Caco-2 (cell line): ENCODE measurements at regions of chr1 and their contacts with region 1.

Region 1: GRCh38 chr1:27365372-27366112 is 1.2 kb downstream of the MAP3K6 start:
- DNase-seq: peak; percentile 74 to 83
- H3K4me3 ChIP-seq: peak overlapping the region; percentile 46
- H3K4me3 Mint-ChIP-seq: peak overlapping the region; percentile 98
- H3K27ac Mint-ChIP-seq: peak overlapping the region; percentile 85
- H3K4me1 ChIP-seq: peaks cover 16% of the 10 kb centered on the region
- H3K4me1 Mint-ChIP-seq: peaks cover 7% of the 10 kb centered on the region
- H3K27me3 ChIP-seq: no peaks in the 10 kb centered on the region
- H3K27me3 Mint-ChIP-seq: no peaks in the 10 kb centered on the region
- CTCF ChIP-seq: no peak

Region 2: GRCh38 chr1:27192039-27192529 is 173.5 kb before region 1 on chr1:
- CTCF ChIA-PET with region 1: no interaction called
- POLR2A ChIA-PET with region 1: no interaction called
- intact Hi-C with region 1: no loop called
- DNase-seq: peak; percentile 11 to 46
- H3K4me3 ChIP-seq: no peak overlapping the region
- H3K4me3 Mint-ChIP-seq: no peak overlapping the region
- H3K27ac Mint-ChIP-seq: peak overlapping the region; percentile 39
- H3K4me1 ChIP-seq: peaks cover 9% of the 10 kb centered on the region
- H3K4me1 Mint-ChIP-seq: peaks cover 11% of the 10 kb centered on the region
- H3K27me3 ChIP-seq: no peaks in the 10 kb centered on the region
- H3K27me3 Mint-ChIP-seq: no peaks in the 10 kb centered on the region
- CTCF ChIP-seq: no peak

Region 3: GRCh38 chr1:27332536-27333281 is 32.8 kb before region 1 on chr1:
- CTCF ChIA-PET with region 1: interaction called, 16 read pairs
- POLR2A ChIA-PET with region 1: no interaction called
- intact Hi-C with region 1: no loop called
- DNase-seq: peak in 1 of 2 experiments; percentile 49
- H3K4me3 ChIP-seq: no peak overlapping the region
- H3K4me3 Mint-ChIP-seq: no peak overlapping the region
- H3K27ac Mint-ChIP-seq: no peak overlapping the region
- H3K4me1 ChIP-seq: no peaks in the 10 kb centered on the region
- H3K4me1 Mint-ChIP-seq: no peaks in the 10 kb centered on the region
- H3K27me3 ChIP-seq: no peaks in the 10 kb centered on the region
- H3K27me3 Mint-ChIP-seq: no peaks in the 10 kb centered on the region
- CTCF ChIP-seq: peak; percentile 60 to 69

Region 4: GRCh38 chr1:27349784-27350662 is 15.5 kb before region 1 on chr1:
- CTCF ChIA-PET with region 1: interaction called, 28 read pairs
- POLR2A ChIA-PET with region 1: interaction called, 14 read pairs
- intact Hi-C with region 1: no loop called
- DNase-seq: peak; percentile 83 to 84
- H3K4me3 ChIP-seq: peak overlapping the region; percentile 73
- H3K4me3 Mint-ChIP-seq: peak overlapping the region; percentile 90
- H3K27ac Mint-ChIP-seq: peak overlapping the region; percentile 84
- H3K4me1 ChIP-seq: 0 out of 2 replicates have a peak, but pooled peaks cover 15% of the 10 kb centered on the region
- H3K4me1 Mint-ChIP-seq: peaks cover 13% of the 10 kb centered on the region
- H3K27me3 ChIP-seq: no peaks in the 10 kb centered on the region
- H3K27me3 Mint-ChIP-seq: no peaks in the 10 kb centered on the region
- CTCF ChIP-seq: no peak

Region 5: GRCh38 chr1:27392096-27392777 is 26.7 kb after region 1 on chr1 and contains the start of gene GPR3:
- CTCF ChIA-PET with region 1: interaction called, 14 read pairs
- POLR2A ChIA-PET with region 1: no interaction called
- intact Hi-C with region 1: loop called (anchors 1 kb)
- DNase-seq: peak; percentile 90
- H3K4me3 ChIP-seq: peak within 1 kb of the TSS; percentile 42
- H3K4me3 Mint-ChIP-seq: peak within 1 kb of the TSS; percentile 73
- H3K27ac Mint-ChIP-seq: peak within 1 kb of the TSS; percentile 62
- H3K4me1 ChIP-seq: no peaks in the 10 kb centered on the region
- H3K4me1 Mint-ChIP-seq: peaks cover 7% of the 10 kb centered on the region
- H3K27me3 ChIP-seq: no peaks in the 10 kb centered on the region
- H3K27me3 Mint-ChIP-seq: no peaks in the 10 kb centered on the region
- CTCF ChIP-seq: peak; percentile 34 to 86
- total RNA-seq, gene GPR3: 0.91 and 1.2 TPM in 2 replicates